MCF 10A (cell line): ENCODE measurements at regions of chr1 and their contacts with region 1.

Region 1: GRCh38 chr1:227563324-227564201 is at the start of gene ZNF678:
- DNase-seq: peak; percentile 100
- H3K4me3 Mint-ChIP-seq: peak within 1 kb of the TSS; percentile 98
- H3K27ac Mint-ChIP-seq: peak within 1 kb of the TSS; percentile 100
- H3K4me1 Mint-ChIP-seq: peaks cover 10% of the 10 kb centered on the region
- H3K27me3 Mint-ChIP-seq: no peaks in the 10 kb centered on the region
- CTCF ChIP-seq: no peak
- total RNA-seq, gene ZNF678: 10.8 and 13.0 TPM in 2 replicates

Region 2: GRCh38 chr1:227542143-227543120 is 21.1 kb before region 1 on chr1:
- CTCF ChIA-PET with region 1: interaction called, 17 read pairs
- POLR2A ChIA-PET with region 1: interaction called, 12 read pairs
- intact Hi-C with region 1: no loop called
- DNase-seq: peak; percentile 65
- H3K4me3 Mint-ChIP-seq: peak overlapping the region; percentile 39
- H3K27ac Mint-ChIP-seq: no peak overlapping the region
- H3K4me1 Mint-ChIP-seq: no peaks in the 10 kb centered on the region
- H3K27me3 Mint-ChIP-seq: no peaks in the 10 kb centered on the region
- CTCF ChIP-seq: peak; percentile 99

Region 3: DNA sequence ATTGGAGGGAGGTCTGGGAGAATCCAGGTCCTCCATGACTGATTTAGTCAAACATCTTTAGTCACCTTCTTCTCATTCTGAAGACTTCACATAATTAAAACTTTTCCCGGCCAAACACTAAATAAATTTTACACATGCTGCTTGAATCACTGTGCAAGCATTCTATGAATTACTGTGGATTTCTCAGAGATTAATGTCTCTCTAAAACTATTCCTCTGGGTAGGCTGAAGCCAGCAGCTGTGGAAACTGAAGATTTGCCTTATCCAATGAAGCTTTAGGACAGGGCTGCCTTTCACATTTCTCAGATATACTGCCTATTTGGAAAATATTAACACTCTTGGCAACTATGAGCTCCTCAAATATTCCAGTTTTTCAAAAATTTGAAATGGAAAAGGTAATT is 109.9 kb after region 1 on chr1:
- CTCF ChIA-PET with region 1: no interaction called
- POLR2A ChIA-PET with region 1: no interaction called
- intact Hi-C with region 1: no loop called
- DNase-seq: no peak
- H3K4me3 Mint-ChIP-seq: no peak overlapping the region
- H3K27ac Mint-ChIP-seq: no peak overlapping the region
- H3K4me1 Mint-ChIP-seq: no peaks in the 10 kb centered on the region
- H3K27me3 Mint-ChIP-seq: no peaks in the 10 kb centered on the region
- CTCF ChIP-seq: no peak

Region 4: DNA sequence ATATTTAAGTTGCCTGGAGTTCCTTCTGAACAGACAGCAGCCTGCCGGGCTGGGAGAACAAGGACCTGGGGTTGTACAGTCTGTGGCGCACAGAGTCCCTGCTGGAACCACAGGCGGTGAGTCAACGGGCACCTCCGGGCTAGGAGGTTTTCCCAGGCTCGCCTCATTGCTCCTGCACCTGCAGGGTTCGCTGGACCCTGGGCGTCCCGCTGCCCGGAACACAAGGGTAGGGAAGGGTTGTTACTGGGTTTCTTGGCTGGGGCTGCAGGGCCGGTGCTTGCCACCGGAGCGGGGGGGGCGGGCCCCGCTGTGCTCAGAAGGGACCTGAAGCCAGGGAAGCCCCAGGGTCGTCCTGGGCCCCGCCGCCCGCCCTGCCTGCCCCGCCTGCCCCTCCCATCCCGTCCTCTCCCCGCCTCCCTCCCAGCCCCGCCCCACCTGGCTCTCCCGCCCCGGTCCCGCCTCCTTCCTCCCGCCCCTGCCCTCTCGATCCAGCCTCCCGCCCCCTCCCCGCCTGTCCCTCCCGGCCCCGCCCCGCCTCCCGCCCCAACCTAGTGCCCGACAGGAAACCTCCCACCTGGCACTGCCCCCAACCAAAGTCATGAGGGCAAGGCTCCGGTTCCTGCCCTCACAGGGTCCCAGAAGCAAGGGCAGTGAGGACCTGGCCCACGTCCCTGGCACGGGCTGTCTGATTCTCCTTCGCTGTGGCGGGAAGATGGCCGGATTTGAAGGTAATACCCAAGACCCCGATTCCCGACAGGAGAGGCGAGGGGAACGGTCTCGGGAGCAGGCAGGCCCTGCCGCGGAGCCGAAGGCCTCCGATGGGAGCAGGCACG is 164.7 kb after region 1 on chr1:
- CTCF ChIA-PET with region 1: no interaction called
- POLR2A ChIA-PET with region 1: interaction called, 6 read pairs
- intact Hi-C with region 1: loop called (anchors 2 kb)
- DNase-seq: peak; percentile 97
- H3K4me3 Mint-ChIP-seq: peak overlapping the region; percentile 93
- H3K27ac Mint-ChIP-seq: peak overlapping the region; percentile 55
- H3K4me1 Mint-ChIP-seq: peaks cover 46% of the 10 kb centered on the region
- H3K27me3 Mint-ChIP-seq: no peaks in the 10 kb centered on the region
- CTCF ChIP-seq: no peak

Region 5: GRCh38 chr1:227734856-227735538 is 171.4 kb after region 1 on chr1 and contains the starts of genes JMJD4 and SNAP47:
- CTCF ChIA-PET with region 1: no interaction called
- POLR2A ChIA-PET with region 1: interaction called, 20 read pairs
- intact Hi-C with region 1: no loop called
- DNase-seq: peak; percentile 98
- H3K4me3 Mint-ChIP-seq: peak within 1 kb of the TSS; percentile 95
- H3K27ac Mint-ChIP-seq: peak within 1 kb of the TSS; percentile 93
- H3K4me1 Mint-ChIP-seq: peaks cover 33% of the 10 kb centered on the region
- H3K27me3 Mint-ChIP-seq: no peaks in the 10 kb centered on the region
- CTCF ChIP-seq: no peak
- total RNA-seq, gene JMJD4: 34.0 and 43.2 TPM in 2 replicates
- total RNA-seq, gene SNAP47: 38.0 and 44.0 TPM in 2 replicates